CD8-positive, alpha-beta T cell (primary cell): ENCODE measurements at regions of chr1 and their contacts with region 1.

Region 1: DNA sequence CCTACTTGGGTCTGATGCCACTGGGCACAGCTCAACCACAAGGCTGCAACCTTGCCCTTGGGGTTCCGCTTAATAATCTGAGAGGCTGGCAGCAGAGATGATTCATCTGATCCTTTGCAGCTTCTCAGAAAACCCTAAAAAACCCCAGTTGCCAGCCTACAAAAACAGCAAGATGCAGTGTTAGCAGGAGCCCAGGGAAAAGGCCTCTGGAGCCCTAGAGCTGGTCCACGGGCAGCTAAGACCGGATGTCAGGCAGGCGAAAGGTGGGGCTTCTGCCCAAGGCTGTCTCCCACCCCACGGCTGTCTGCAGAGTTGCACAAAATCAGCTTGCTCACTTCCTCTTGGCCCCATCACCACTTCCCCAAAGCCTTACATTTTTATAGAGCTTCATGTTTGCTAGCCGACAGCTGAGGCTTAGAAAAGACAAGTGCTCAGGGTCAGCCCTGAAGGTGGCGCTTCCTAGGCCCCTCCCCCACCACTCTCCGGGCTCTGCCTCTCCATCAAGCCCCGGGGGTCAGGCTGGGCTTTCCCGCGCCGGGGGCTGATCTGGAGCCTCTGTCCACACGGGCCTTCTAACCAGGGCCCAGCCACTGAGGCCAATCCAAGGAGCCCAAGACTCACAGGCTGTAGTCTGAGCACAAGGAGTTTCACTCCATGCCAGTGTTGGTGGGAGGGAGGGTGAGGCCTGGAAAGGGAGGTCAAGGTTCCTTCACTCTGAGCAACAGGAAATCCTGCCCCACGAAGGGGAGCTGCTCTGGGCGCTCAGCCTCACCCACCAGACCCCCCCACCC is 4.2 kb upstream of the ADORA3 start:
- DNase-seq: peak; percentile 19 to 79 (median 64)
- ATAC-seq: peak; percentile 62
- H3K4me3 ChIP-seq: peak overlapping the region; percentile 38 to 58
- H3K4me3 Mint-ChIP-seq: peak overlapping the region; percentile 78
- H3K27ac ChIP-seq: peak overlapping the region; percentile 55 to 90
- H3K27ac Mint-ChIP-seq: peak overlapping the region; percentile 95
- H3K4me1 ChIP-seq: peaks cover 88% of the 10 kb centered on the region
- H3K4me1 Mint-ChIP-seq: peaks cover 52% of the 10 kb centered on the region
- H3K27me3 ChIP-seq: no peaks in the 10 kb centered on the region
- H3K27me3 Mint-ChIP-seq: no peaks in the 10 kb centered on the region
- CTCF ChIP-seq: no peak

Region 2: DNA sequence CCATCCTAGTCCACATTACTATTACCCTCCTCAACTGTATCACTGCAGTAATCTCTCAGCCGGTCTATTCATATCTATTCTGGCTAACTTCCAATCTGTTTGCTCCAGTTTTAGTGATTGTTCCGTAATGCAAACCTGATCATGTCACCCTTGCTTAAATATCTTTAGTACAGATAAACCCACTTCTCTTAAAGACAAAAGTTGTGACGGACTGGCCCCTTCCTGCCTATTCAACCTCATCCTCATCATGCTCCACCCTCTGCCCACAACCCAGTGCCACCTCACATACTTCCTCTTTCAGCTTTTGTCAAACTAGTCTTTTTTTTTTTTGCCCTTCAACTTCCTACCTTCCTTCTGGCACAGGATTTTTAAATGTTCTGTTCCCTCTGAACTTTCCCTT is 36.6 kb before region 1 on chr1:
- CTCF ChIA-PET with region 1: interaction called, 52 read pairs
- POLR2A ChIA-PET with region 1: interaction called, 16 read pairs
- intact Hi-C with region 1: loop called (anchors 2 to 5 kb)
- DNase-seq: peak; percentile 35 to 91 (median 75)
- ATAC-seq: peak; percentile 95
- H3K4me3 ChIP-seq: peak overlapping the region; percentile 28 to 32
- H3K4me3 Mint-ChIP-seq: no peak overlapping the region
- H3K27ac ChIP-seq: peak overlapping the region; percentile 54 to 84
- H3K27ac Mint-ChIP-seq: no peak overlapping the region
- H3K4me1 ChIP-seq: peaks cover 55% of the 10 kb centered on the region
- H3K4me1 Mint-ChIP-seq: peaks cover 25% of the 10 kb centered on the region
- H3K27me3 ChIP-seq: no peaks in the 10 kb centered on the region
- H3K27me3 Mint-ChIP-seq: no peaks in the 10 kb centered on the region
- CTCF ChIP-seq: no peak

Region 3: GRCh38 chr1:111592389-111593361 is 85.1 kb after region 1 on chr1:
- CTCF ChIA-PET with region 1: interaction called, 10 read pairs
- POLR2A ChIA-PET with region 1: interaction called, 10 read pairs
- intact Hi-C with region 1: loop called in 1 of 2 experiments (anchors 2 kb)
- DNase-seq: peak; percentile 75 to 96 (median 92)
- ATAC-seq: peak; percentile 91
- H3K4me3 ChIP-seq: peak overlapping the region in 1 of 2 experiments; percentile 38
- H3K4me3 Mint-ChIP-seq: peak overlapping the region; percentile 53
- H3K27ac ChIP-seq: peak overlapping the region; percentile 48 to 72
- H3K27ac Mint-ChIP-seq: peak overlapping the region; percentile 89
- H3K4me1 ChIP-seq: peaks cover 64% of the 10 kb centered on the region
- H3K4me1 Mint-ChIP-seq: peaks cover 58% of the 10 kb centered on the region
- H3K27me3 ChIP-seq: no peaks in the 10 kb centered on the region
- H3K27me3 Mint-ChIP-seq: no peaks in the 10 kb centered on the region
- CTCF ChIP-seq: no peak

Region 4: DNA sequence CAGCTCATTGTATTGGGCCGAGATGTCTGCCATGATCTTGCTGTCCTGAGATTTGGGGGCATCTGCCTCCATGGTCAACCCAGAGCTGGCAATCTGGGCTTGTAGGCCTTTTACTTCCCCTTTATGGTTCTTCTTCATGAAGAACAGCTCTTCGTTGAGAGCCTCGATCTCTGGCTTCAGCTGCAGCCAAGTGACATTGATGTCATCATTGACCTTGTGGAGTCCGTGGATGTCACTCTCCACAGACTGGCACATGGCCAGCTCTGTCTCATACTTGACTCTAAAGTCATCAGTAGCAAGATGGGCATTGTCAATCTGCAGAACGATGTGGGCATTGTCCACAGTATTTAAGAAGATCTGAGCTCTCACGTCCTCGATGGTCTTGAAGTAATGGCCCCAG is 141.2 kb after region 1 on chr1:
- CTCF ChIA-PET with region 1: interaction called, 25 read pairs
- POLR2A ChIA-PET with region 1: interaction called, 4 read pairs
- intact Hi-C with region 1: no loop called
- DNase-seq: no peak
- ATAC-seq: no peak
- H3K4me3 ChIP-seq: no peak overlapping the region
- H3K4me3 Mint-ChIP-seq: peak overlapping the region; percentile 49
- H3K27ac ChIP-seq: peak overlapping the region in 1 of 2 experiments; percentile 13
- H3K27ac Mint-ChIP-seq: peak overlapping the region; percentile 90
- H3K4me1 ChIP-seq: peaks cover 74% of the 10 kb centered on the region
- H3K4me1 Mint-ChIP-seq: peaks cover 85% of the 10 kb centered on the region
- H3K27me3 ChIP-seq: no peaks in the 10 kb centered on the region
- H3K27me3 Mint-ChIP-seq: no peaks in the 10 kb centered on the region
- CTCF ChIP-seq: no peak

Region 5: DNA sequence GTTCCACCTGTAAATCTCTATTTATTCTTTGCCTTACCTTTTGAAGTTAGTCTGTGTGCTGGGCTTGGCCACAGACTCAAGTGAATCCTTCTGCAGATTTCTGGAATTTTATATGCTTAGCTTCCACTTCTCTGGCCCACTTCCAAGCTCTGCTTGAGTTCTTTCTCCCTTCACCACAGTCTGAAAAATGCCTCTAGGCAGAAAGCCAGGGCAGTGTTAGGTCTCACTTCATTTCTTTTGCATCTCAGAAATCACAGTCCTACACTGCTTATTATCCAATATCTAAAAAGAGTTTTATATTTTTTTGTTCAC is 182.7 kb after region 1 on chr1:
- CTCF ChIA-PET with region 1: interaction called, 23 read pairs
- POLR2A ChIA-PET with region 1: interaction called, 3 read pairs
- intact Hi-C with region 1: no loop called
- DNase-seq: no peak
- ATAC-seq: no peak
- H3K4me3 ChIP-seq: no peak overlapping the region
- H3K4me3 Mint-ChIP-seq: no peak overlapping the region
- H3K27ac ChIP-seq: no peak overlapping the region
- H3K27ac Mint-ChIP-seq: peak overlapping the region; percentile 62
- H3K4me1 ChIP-seq: peaks cover 7% of the 10 kb centered on the region
- H3K4me1 Mint-ChIP-seq: peaks cover 70% of the 10 kb centered on the region
- H3K27me3 ChIP-seq: no peaks in the 10 kb centered on the region
- H3K27me3 Mint-ChIP-seq: no peaks in the 10 kb centered on the region
- CTCF ChIP-seq: no peak

Region 6: GRCh38 chr1:111720274-111720976 is 212.8 kb after region 1 on chr1:
- CTCF ChIA-PET with region 1: interaction called, 80 read pairs
- POLR2A ChIA-PET with region 1: no interaction called
- intact Hi-C with region 1: loop called (anchors 2 kb)
- DNase-seq: no peak
- ATAC-seq: no peak
- H3K4me3 ChIP-seq: no peak overlapping the region
- H3K4me3 Mint-ChIP-seq: no peak overlapping the region
- H3K27ac ChIP-seq: no peak overlapping the region
- H3K27ac Mint-ChIP-seq: no peak overlapping the region
- H3K4me1 ChIP-seq: no peaks in the 10 kb centered on the region
- H3K4me1 Mint-ChIP-seq: peaks cover 15% of the 10 kb centered on the region
- H3K27me3 ChIP-seq: no peaks in the 10 kb centered on the region
- H3K27me3 Mint-ChIP-seq: no peaks in the 10 kb centered on the region
- CTCF ChIP-seq: no peak

Region 7: GRCh38 chr1:111769517-111770146 is 262.0 kb after region 1 on chr1:
- CTCF ChIA-PET with region 1: interaction called, 24 read pairs
- POLR2A ChIA-PET with region 1: interaction called, 3 read pairs
- intact Hi-C with region 1: loop called (anchors 1 kb)
- DNase-seq: peak; percentile 7 to 82 (median 57)
- ATAC-seq: peak; percentile 72
- H3K4me3 ChIP-seq: no peak overlapping the region
- H3K4me3 Mint-ChIP-seq: no peak overlapping the region
- H3K27ac ChIP-seq: no peak overlapping the region
- H3K27ac Mint-ChIP-seq: no peak overlapping the region
- H3K4me1 ChIP-seq: no peaks in the 10 kb centered on the region
- H3K4me1 Mint-ChIP-seq: peaks cover 7% of the 10 kb centered on the region
- H3K27me3 ChIP-seq: no peaks in the 10 kb centered on the region
- H3K27me3 Mint-ChIP-seq: no peaks in the 10 kb centered on the region
- CTCF ChIP-seq: peak; percentile 94